Activated T-helper 1 cell treated with anti-CD3 and anti-CD28 coated beads, Interleukin-12 subunit alpha, Interleukin-12 subunit beta, Interleukin-2, Interleukin-4 antibody, amounts not matched to agents 30 ng/mL and 10 ng/mL and 1 ng/mL, durations not matched to agents 14 hours and 24 hours and 36 hours (primary cell): ENCODE measurements at regions of chr9 and their contacts with region 1.

Region 1: DNA sequence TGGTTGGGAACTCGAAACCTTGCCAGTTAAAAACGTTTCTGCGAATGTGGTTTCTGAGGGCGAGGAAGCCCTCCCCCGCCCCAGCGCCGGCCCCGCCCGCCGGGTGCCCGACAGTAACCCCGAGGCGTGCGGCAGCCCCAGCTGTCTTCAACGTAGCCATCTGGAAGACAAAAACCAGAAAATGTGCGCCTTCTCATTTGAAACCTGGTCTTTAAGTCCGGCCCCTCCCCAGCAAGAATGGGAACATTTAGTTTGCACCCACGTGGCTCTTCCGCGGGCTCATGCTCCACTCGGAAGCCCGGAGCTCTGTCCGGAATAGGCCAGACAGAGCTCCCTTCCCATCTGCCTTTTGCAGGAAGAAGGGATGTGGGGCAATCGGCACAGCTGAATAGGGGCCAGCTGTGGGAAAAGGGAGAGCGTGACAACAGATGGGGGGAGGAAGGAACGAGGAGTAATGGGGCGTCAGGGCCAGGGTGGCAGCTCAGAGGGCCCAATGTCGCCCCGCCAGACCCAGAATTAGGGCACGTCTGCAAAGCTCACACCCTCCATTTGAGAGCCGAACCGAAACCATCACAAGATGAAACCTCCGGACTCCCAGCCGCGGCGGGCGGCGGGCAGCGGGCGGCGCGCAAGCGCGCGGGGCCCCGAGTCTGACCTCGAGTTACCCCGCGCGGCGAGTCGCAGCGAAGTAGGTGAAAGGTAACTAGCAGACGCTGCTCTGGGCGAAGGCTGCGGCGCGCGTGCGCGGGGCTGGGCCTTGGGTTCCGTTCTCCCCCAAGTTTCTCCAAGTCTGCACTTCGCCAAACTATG is 63.4 kb upstream of the ABCA1 start:
- DNase-seq: peak; percentile 79
- H3K4me3 Mint-ChIP-seq: peak overlapping the region; percentile 84
- H3K27ac Mint-ChIP-seq: peak overlapping the region; percentile 74
- H3K4me1 Mint-ChIP-seq: peaks cover 44% of the 10 kb centered on the region
- H3K27me3 Mint-ChIP-seq: peaks cover 29% of the 10 kb centered on the region

Region 2: GRCh38 chr9:104961238-104961637 is 30.1 kb before region 1 on chr9:
- intact Hi-C with region 1: loop called (anchors 1 kb)
- DNase-seq: peak; percentile 62
- H3K4me3 Mint-ChIP-seq: peak overlapping the region; percentile 19
- H3K27ac Mint-ChIP-seq: peak overlapping the region; percentile 41
- H3K4me1 Mint-ChIP-seq: peaks cover 47% of the 10 kb centered on the region
- H3K27me3 Mint-ChIP-seq: no peaks in the 10 kb centered on the region

Region 3: DNA sequence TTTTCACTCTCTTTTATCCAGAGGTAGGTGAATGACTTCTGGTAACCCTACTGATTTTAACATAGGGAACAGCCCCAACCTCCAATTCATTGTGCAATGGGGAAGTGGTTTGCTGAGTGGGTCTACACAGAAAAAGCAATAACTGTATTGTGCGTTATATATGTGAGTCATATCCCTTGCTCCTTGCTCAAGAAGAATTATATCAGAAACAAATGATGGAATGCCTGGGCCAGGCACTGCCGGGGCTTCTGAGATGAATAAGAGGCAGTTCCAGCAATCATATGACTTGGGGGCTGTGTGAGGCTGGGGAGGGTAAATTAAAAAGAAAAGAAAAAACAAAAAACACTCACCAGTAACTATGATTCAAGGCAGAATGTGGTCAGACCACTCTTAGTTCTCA is 15.8 kb after region 1 on chr9:
- intact Hi-C with region 1: loop called (anchors 1 kb)
- DNase-seq: no peak
- H3K4me3 Mint-ChIP-seq: no peak overlapping the region
- H3K27ac Mint-ChIP-seq: no peak overlapping the region
- H3K4me1 Mint-ChIP-seq: peaks cover 15% of the 10 kb centered on the region
- H3K27me3 Mint-ChIP-seq: peaks cover 2% of the 10 kb centered on the region

Region 4: DNA sequence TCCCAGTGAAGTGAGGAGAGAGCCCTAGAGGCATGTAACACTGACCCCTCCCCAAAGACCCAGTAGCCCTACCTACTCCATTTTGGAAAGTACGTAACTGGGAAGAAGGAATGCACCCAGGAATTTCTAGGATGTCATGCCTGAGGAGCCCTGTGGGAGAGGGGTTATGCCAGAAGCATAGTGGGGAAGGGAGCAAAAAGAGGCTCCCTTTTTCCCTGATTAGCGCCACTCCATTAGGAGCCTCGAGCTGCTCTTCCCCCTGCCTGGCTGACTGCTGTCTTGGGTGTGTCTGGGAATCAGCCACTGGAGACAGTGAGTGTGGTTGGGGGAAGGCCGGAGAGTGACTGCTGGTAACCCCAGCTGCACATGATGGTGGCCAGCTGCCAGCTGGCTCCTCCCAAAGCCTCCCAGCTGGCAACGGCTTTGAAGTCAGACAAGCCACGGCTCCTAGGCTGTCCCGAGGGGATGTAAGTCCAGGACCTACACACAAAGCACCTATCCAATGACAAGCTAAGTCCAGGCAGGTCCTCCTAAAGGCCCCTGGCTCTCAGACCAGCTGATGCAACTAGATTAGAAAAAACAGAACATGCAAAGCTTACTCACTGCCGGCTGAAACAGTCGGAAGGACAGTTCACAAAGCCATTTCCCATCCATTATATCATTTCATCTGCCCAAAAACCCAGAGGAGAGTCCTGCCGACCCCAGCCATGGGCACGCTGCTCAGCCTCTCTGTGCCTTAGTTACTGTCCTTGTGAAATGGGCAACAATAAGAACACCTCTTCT is 73.2 kb after region 1 on chr9:
- intact Hi-C with region 1: no loop called
- DNase-seq: no peak
- H3K4me3 Mint-ChIP-seq: no peak overlapping the region
- H3K27ac Mint-ChIP-seq: no peak overlapping the region
- H3K4me1 Mint-ChIP-seq: peaks cover 9% of the 10 kb centered on the region
- H3K27me3 Mint-ChIP-seq: no peaks in the 10 kb centered on the region

Region 5: DNA sequence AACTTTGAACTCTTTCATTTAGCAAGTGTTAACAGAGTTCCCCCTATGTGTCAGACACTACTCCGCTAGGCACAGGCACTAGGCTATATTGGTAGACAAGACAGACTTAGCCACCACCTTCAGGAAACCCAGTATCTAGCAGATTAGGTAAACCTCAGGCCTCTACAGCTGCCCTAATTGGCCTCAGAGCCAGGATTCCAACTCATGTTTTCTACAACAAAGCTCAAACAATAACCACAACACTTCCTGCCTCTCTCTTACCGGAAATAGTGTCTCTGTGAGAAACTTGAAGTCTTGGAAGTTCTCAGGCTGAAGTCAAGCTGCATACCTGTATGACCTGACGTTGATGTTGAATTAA is 136.5 kb after region 1 on chr9:
- intact Hi-C with region 1: loop called (anchors 1 kb)
- DNase-seq: peak; percentile 73
- H3K4me3 Mint-ChIP-seq: no peak overlapping the region
- H3K27ac Mint-ChIP-seq: no peak overlapping the region
- H3K4me1 Mint-ChIP-seq: peaks cover 38% of the 10 kb centered on the region
- H3K27me3 Mint-ChIP-seq: peaks cover 15% of the 10 kb centered on the region

Region 6: GRCh38 chr9:105244003-105244733 is 252.8 kb after region 1 on chr9 and contains the start of gene SLC44A1:
- intact Hi-C with region 1: loop called (anchors 1 kb)
- DNase-seq: peak; percentile 93
- H3K4me3 Mint-ChIP-seq: peak within 1 kb of the TSS; percentile 88
- H3K27ac Mint-ChIP-seq: peak within 1 kb of the TSS; percentile 69
- H3K4me1 Mint-ChIP-seq: peaks cover 31% of the 10 kb centered on the region
- H3K27me3 Mint-ChIP-seq: peaks cover 62% of the 10 kb centered on the region
- total RNA-seq, gene SLC44A1: 3.7 and 3.8 TPM in 2 replicates

Region 7: DNA sequence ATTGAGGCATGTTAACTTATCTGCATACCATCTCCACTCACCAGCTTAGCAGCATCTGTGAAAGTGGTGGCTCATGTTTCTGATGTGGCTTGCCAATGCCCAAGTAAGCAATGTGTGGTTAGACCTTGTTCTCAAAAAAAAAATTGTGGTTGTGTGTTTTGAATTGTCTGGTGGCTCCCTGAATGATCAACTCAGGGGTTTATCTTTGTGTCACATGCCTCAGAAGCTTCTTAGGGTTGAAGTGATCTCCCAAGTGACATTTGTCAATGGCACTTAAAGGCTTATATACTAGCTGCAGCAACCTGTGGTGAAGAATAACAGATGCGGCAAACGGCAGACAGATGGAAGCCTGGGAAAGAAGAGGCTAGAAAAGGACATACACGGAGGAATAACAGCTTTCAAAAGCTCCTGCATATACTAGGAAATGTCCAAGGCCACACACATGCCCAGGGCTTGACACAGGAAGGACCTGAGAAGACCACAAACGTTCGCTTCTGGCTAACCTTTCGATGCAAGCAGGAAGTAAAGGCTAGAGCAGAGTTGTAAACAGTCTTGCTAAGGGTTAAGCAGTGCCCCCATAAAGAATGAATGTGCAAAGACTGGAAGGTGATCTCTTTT is 414.3 kb after region 1 on chr9:
- intact Hi-C with region 1: loop called (anchors 1 kb)
- DNase-seq: peak; percentile 61
- H3K4me3 Mint-ChIP-seq: peak overlapping the region; percentile 23
- H3K27ac Mint-ChIP-seq: peak overlapping the region; percentile 90
- H3K4me1 Mint-ChIP-seq: peaks cover 31% of the 10 kb centered on the region
- H3K27me3 Mint-ChIP-seq: peaks cover 66% of the 10 kb centered on the region

Region 8: DNA sequence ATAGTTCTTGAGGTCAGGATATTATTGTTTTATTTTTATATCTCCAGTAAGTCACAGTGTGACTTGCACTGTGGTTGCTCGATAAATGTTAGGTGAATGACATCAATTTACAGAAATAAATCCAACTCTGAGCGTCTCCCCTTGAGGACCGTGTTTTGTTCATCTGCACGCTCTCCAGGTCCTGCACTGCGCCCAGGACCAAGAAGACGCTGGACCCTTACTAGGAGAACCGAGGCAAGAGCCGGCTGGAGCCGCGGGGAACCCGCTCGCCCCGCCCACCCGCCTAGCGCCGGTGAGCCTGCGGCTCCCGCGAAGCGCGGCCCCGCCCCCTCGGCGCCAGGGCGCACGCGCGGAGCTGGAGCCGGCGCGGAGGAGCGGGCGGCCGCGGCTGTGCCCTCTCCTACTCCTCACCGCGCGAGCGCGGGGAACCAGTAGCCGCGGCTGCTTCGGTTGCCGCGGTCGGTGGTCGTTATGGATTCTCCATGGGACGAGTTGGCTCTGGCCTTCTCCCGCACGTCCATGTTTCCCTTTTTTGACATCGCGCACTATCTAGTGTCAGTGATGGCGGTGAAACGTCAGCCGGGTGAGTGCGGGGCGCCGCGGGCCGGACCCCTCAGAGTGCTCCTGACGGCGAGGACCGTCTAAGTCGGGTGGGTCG is 703.0 kb after region 1 on chr9 and contains the start of gene TMEM38B:
- intact Hi-C with region 1: loop called (anchors 10 kb)
- DNase-seq: peak; percentile 77
- H3K4me3 Mint-ChIP-seq: peak within 1 kb of the TSS; percentile 87
- H3K27ac Mint-ChIP-seq: peak within 1 kb of the TSS; percentile 61
- H3K4me1 Mint-ChIP-seq: peaks cover 26% of the 10 kb centered on the region
- H3K27me3 Mint-ChIP-seq: peaks cover 24% of the 10 kb centered on the region
- total RNA-seq, gene TMEM38B: 11.9 and 13.8 TPM in 2 replicates